ENCODE measurements at regions of chr12 and their contacts with region 1.

Region 1: GRCh38 chr12:113422030-113422885 is at the start of gene SDSL:
- DNase-seq: peak; percentile 72
- ATAC-seq: peak; percentile 88
- total RNA-seq, gene SDSL: 6.3 TPM

Region 2: GRCh38 chr12:113184900-113185773 is 237.1 kb before region 1 on chr12 and contains the starts of genes DDX54 and RITA1:
- intact Hi-C with region 1: loop called (anchors 10 kb)
- DNase-seq: peak; percentile 94
- ATAC-seq: peak; percentile 94
- total RNA-seq, gene DDX54: 33.6 TPM
- total RNA-seq, gene RITA1: 16.3 TPM

Region 3: GRCh38 chr12:113310489-113310888 is 111.8 kb before region 1 on chr12:
- intact Hi-C with region 1: loop called (anchors 5 kb)
- DNase-seq: no peak
- ATAC-seq: no peak